ENCODE measurements at regions of chr4 and their contacts with region 1.

Region 1: DNA sequence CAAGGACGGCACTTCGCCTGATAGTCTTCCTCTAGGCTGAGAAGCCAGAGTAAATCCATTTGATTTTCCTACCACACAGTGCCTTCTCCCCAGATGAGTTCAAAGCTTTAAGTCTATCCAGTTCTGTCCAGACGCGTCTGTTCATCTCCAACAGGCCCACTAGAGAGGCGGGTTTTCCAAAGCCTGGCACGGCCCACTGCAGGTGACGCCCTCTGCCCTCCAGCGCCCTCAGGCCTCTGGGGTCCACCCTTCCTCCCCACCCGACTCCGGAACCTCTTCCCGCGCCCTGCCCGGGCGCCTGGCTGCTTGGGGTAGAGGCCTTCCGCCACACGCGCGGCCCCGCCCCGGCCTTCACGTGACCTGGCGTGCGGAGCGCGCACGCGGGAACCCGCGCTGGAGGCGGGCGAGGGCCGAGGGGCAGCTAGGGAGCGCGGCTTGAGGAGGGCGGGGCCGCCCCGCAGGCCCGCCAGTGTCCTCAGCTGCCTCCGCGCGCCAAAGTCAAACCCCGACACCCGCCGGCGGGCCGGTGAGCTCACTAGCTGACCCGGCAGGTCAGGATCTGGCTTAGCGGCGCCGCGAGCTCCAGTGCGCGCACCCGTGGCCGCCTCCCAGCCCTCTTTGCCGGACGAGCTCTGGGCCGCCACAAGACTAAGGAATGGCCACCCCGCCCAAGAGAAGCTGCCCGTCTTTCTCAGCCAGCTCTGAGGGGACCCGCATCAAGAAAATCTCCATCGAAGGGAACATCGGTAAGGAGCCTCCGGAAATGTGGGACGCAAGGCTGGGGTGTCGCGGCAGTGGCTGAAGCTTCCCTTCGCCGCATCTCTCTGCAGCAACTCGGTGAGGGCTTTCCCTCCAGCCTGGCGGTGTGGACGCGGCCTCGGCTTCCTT is at the start of gene DCK:
- DNase-seq: no peak
- ATAC-seq: peak; percentile 87
- H3K4me3 ChIP-seq: peak within 1 kb of the TSS; percentile 95
- H3K27ac ChIP-seq: peak within 1 kb of the TSS; percentile 82
- H3K4me1 ChIP-seq: 0 out of 2 replicates have a peak, but pooled peaks cover 3% of the 10 kb centered on the region
- H3K27me3 ChIP-seq: no peaks in the 10 kb centered on the region
- CTCF ChIP-seq: no peak
- EP300 ChIP-seq: no peak
- POLR2A ChIP-seq: peak; percentile 94
- RAD21 ChIP-seq: no peak
- polyA plus RNA-seq, gene DCK: 20.0 to 26.7 TPM

Region 2: GRCh38 chr4:70901984-70902576 is 91.3 kb before region 1 on chr4 and contains the start of gene MOB1B:
- CTCF ChIA-PET with region 1: interaction called, 3 read pairs
- POLR2A ChIA-PET with region 1: interaction called, 10 read pairs
- RAD21 ChIA-PET with region 1: interaction called, 9 read pairs
- SMC1A ChIA-PET with region 1: interaction called, 7 read pairs
- in situ Hi-C with region 1: no loop called
- intact Hi-C with region 1: no loop called
- DNase-seq: peak; percentile 34
- ATAC-seq: peak; percentile 94
- H3K4me3 ChIP-seq: peak within 1 kb of the TSS; percentile 99
- H3K27ac ChIP-seq: peak within 1 kb of the TSS; percentile 53
- H3K4me1 ChIP-seq: no peaks in the 10 kb centered on the region
- H3K27me3 ChIP-seq: no peaks in the 10 kb centered on the region
- CTCF ChIP-seq: peak; percentile 23 to 49 (median 41); a peak in 4 of 6 replicates
- EP300 ChIP-seq: no peak
- POLR2A ChIP-seq: peak; percentile 83
- RAD21 ChIP-seq: peak; percentile 51
- polyA plus RNA-seq, gene MOB1B: 1.9 TPM

Region 3: DNA sequence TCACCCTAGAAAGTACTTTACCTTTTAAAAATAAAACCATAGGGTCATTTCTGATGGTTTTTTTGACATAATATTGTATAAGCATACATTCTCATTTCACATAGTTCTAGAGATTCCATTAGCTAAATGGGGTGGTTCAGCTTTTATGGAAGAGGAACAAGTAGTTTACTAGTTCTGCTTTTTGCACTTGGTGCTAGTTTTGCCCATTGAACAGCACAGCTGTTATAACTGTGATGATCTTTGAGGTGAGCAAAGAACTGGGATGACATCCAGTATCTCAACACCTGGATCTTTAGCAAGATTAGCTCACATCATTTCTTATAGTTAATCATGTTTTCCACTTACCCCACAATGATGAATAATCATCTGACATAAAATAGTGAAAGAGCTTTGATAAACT is 50.3 kb before region 1 on chr4:
- CTCF ChIA-PET with region 1: interaction called, 5 read pairs
- POLR2A ChIA-PET with region 1: interaction called, 9 read pairs
- RAD21 ChIA-PET with region 1: interaction called, 11 read pairs
- SMC1A ChIA-PET with region 1: interaction called, 5 read pairs
- in situ Hi-C with region 1: no loop called
- intact Hi-C with region 1: no loop called
- DNase-seq: no peak
- ATAC-seq: peak; percentile 87
- H3K4me3 ChIP-seq: no peak overlapping the region
- H3K27ac ChIP-seq: no peak overlapping the region
- H3K4me1 ChIP-seq: no peaks in the 10 kb centered on the region
- H3K27me3 ChIP-seq: no peaks in the 10 kb centered on the region
- CTCF ChIP-seq: no peak
- EP300 ChIP-seq: no peak
- POLR2A ChIP-seq: no peak
- RAD21 ChIP-seq: no peak

Region 4: GRCh38 chr4:70979445-70980008 is 13.9 kb before region 1 on chr4:
- CTCF ChIA-PET with region 1: no interaction called
- POLR2A ChIA-PET with region 1: interaction called, 3 read pairs
- RAD21 ChIA-PET with region 1: interaction called, 3 read pairs
- SMC1A ChIA-PET with region 1: interaction called, 11 read pairs
- in situ Hi-C with region 1: no loop called
- intact Hi-C with region 1: no loop called
- DNase-seq: no peak
- ATAC-seq: peak; percentile 83
- H3K4me3 ChIP-seq: no peak overlapping the region
- H3K27ac ChIP-seq: no peak overlapping the region
- H3K4me1 ChIP-seq: no peaks in the 10 kb centered on the region; the same call in 1 of the 2 replicates
- H3K27me3 ChIP-seq: no peaks in the 10 kb centered on the region
- CTCF ChIP-seq: no peak
- EP300 ChIP-seq: no peak
- POLR2A ChIP-seq: no peak
- RAD21 ChIP-seq: no peak

Region 5: DNA sequence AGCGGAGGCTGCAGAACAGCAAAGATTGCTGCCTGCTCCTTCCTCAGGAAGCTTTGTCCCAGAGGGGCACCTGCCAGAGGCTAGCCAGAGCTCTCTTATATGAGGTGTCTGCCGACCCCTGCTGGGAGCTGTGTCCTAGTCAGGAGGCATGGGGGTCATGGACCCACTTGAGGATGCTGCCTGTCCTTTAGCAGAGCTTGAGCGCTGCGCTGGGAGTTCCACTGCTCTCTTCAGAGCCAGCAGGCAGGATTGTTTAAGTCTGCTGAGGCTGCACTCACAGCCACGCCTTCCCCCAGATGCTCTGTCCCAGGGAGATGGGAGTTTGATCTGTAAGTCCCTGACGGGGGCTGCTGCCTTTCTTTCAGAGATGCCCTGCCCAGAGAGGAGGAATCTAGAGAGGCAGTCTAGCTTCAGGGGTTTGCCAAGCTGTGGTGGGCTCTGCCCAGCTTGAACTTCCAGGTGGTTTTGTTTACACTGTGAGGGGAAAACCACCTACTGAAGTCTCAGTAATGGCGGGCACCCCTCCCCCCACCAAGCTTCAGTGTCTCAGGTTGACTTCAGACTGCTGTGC is 10.9 kb after region 1 on chr4:
- CTCF ChIA-PET with region 1: interaction called, 147 read pairs
- POLR2A ChIA-PET with region 1: interaction called, 38 read pairs
- RAD21 ChIA-PET with region 1: interaction called, 127 read pairs
- SMC1A ChIA-PET with region 1: interaction called, 169 read pairs
- in situ Hi-C with region 1: no loop called
- intact Hi-C with region 1: loop called (anchors 1 kb)
- DNase-seq: no peak
- ATAC-seq: peak; percentile 74
- H3K4me3 ChIP-seq: peak overlapping the region; percentile 45; the same call in 1 of the 2 replicates
- H3K27ac ChIP-seq: peak overlapping the region; percentile 24; the same call in 1 of the 2 replicates
- H3K4me1 ChIP-seq: peaks cover 9% of the 10 kb centered on the region
- H3K27me3 ChIP-seq: no peaks in the 10 kb centered on the region
- CTCF ChIP-seq: peak in 1 of 3 experiments; percentile 26; a peak in 1 of 6 replicates
- EP300 ChIP-seq: no peak
- POLR2A ChIP-seq: no peak
- RAD21 ChIP-seq: peak; percentile 47

Measured in GM12878 (cell line).